K562 (cell line): ENCODE measurements at regions of chr19 and their contacts with region 1.

Region 1: GRCh38 chr19:19145684-19146608 is 7.7 kb upstream of the TMEM161A start:
- DNase-seq: peak; percentile 82 to 88 (median 86)
- ATAC-seq: peak; percentile 95
- H3K4me3 ChIP-seq: no peak overlapping the region
- H3K27ac ChIP-seq: 0 out of 3 replicates have a peak overlapping the region, but pooled peaks have one; percentile 28
- H3K4me1 ChIP-seq: peaks cover 0 to 19% of the 10 kb centered on the region in 2 experiments; a peak in 2 of 5 replicates
- H3K27me3 ChIP-seq: no peaks in the 10 kb centered on the region; a peak in 1 of 5 replicates
- CTCF ChIP-seq: peak; percentile 85 to 97 (median 95)
- EP300 ChIP-seq: no peak
- POLR2A ChIP-seq: no peak
- RAD21 ChIP-seq: peak; percentile 86 to 93

Region 2: GRCh38 chr19:18919086-18919899 is 226.7 kb before region 1 on chr19 and contains the starts of genes COPE and DDX49:
- CTCF ChIA-PET with region 1: no interaction called
- POLR2A ChIA-PET with region 1: no interaction called
- in situ Hi-C with region 1: no loop called
- intact Hi-C with region 1: no loop called
- DNase-seq: peak; percentile 97 to 100 (median 98)
- ATAC-seq: peak; percentile 98
- H3K4me3 ChIP-seq: peak within 1 kb of the TSS; percentile 95
- H3K27ac ChIP-seq: peak within 1 kb of the TSS; percentile 90
- H3K4me1 ChIP-seq: peaks cover 8 to 27% of the 10 kb centered on the region in 2 experiments; a peak in 4 of 5 replicates
- H3K27me3 ChIP-seq: no peaks in the 10 kb centered on the region
- CTCF ChIP-seq: no peak
- EP300 ChIP-seq: no peak
- POLR2A ChIP-seq: peak; percentile 95
- RAD21 ChIP-seq: no peak
- polyA plus RNA-seq, gene COPE: 5.8 to 18.3 TPM
- polyA plus RNA-seq, gene DDX49: 1.1 to 6.3 TPM

Region 3: GRCh38 chr19:18975011-18975410 is 170.9 kb before region 1 on chr19:
- CTCF ChIA-PET with region 1: no interaction called
- POLR2A ChIA-PET with region 1: no interaction called
- in situ Hi-C with region 1: no loop called
- intact Hi-C with region 1: no loop called
- DNase-seq: no peak
- ATAC-seq: no peak
- H3K4me3 ChIP-seq: no peak overlapping the region
- H3K27ac ChIP-seq: no peak overlapping the region
- H3K4me1 ChIP-seq: peaks cover 9 to 12% of the 10 kb centered on the region in 2 experiments
- H3K27me3 ChIP-seq: no peaks in the 10 kb centered on the region; a peak in 1 of 5 replicates
- CTCF ChIP-seq: no peak
- EP300 ChIP-seq: no peak
- POLR2A ChIP-seq: no peak
- RAD21 ChIP-seq: no peak

Region 4: DNA sequence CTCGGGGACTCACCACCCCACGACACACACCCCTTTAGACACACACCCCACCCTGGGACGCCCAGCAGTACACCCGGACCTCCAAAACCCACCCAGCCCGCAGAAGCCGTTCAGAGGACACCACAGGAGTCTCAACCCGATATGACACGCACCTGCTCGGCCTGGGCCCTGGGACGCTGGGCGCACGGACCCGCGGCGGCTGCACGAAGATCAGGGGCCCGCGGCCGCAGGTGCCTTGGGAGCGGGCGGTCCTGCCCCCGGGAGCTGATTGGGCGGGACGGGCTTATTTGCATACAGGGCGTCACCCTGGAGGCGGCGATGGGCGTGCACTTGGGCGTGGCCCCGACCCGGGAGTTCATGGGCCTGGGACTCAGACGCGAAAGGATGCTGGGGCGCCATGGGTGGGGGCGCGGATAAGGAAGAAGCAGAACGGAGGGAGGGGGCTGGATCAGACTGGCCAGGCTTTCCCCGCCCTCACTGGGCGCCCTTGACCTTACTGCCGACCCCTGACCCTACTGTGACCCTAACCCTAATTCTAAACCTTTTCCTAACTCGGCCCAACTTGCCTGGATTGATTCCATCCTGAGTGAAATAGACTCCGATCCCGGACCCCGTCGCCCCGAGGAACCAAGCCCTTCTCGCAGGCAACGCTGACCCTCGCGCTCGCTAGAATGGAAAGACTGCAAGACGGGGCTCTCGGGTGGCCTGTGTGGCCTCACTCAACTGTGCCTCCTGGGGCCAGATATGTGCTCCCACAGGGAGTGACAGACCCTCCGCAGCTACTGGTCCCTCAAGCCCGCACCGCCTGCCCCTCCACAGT is 24.3 kb after region 1 on chr19 and contains the start of gene MEF2B:
- CTCF ChIA-PET with region 1: interaction called, 20 read pairs
- POLR2A ChIA-PET with region 1: interaction called, 4 read pairs
- in situ Hi-C with region 1: no loop called
- intact Hi-C with region 1: loop called (anchors 1 kb)
- DNase-seq: peak; percentile 94 to 98 (median 98)
- ATAC-seq: peak; percentile 94
- H3K4me3 ChIP-seq: peak within 1 kb of the TSS; percentile 34
- H3K27ac ChIP-seq: peak within 1 kb of the TSS; percentile 40; the same call in 1 of the 3 replicates
- H3K4me1 ChIP-seq: peaks cover 31 to 34% of the 10 kb centered on the region in 2 experiments; a peak in 4 of 5 replicates
- H3K27me3 ChIP-seq: no peaks in the 10 kb centered on the region
- CTCF ChIP-seq: no peak
- EP300 ChIP-seq: no peak
- POLR2A ChIP-seq: 0 out of 2 replicates have a peak, but pooled peaks have one; percentile 19
- RAD21 ChIP-seq: no peak
- polyA plus RNA-seq, gene MEF2B: not detected

Region 5: GRCh38 chr19:19224852-19225494 is 79.0 kb after region 1 on chr19:
- CTCF ChIA-PET with region 1: interaction called, 12 read pairs
- POLR2A ChIA-PET with region 1: no interaction called
- in situ Hi-C with region 1: no loop called
- intact Hi-C with region 1: loop called (anchors 1 kb)
- DNase-seq: peak; percentile 96 to 97 (median 96)
- ATAC-seq: peak; percentile 96
- H3K4me3 ChIP-seq: peak overlapping the region; percentile 37
- H3K27ac ChIP-seq: no peak overlapping the region
- H3K4me1 ChIP-seq: peaks cover 3 to 25% of the 10 kb centered on the region in 2 experiments; a peak in 4 of 5 replicates
- H3K27me3 ChIP-seq: peaks cover 5 to 48% of the 10 kb centered on the region in 2 experiments; a peak in 3 of 5 replicates
- CTCF ChIP-seq: peak; percentile 88 to 91 (median 90)
- EP300 ChIP-seq: 0 out of 2 replicates have a peak, but pooled peaks have one; percentile 16
- POLR2A ChIP-seq: no peak
- RAD21 ChIP-seq: peak; percentile 76 to 83

Region 6: GRCh38 chr19:19342756-19343322 is 196.9 kb after region 1 on chr19:
- CTCF ChIA-PET with region 1: interaction called, 10 read pairs
- POLR2A ChIA-PET with region 1: no interaction called
- in situ Hi-C with region 1: loop called (anchors 5 kb)
- intact Hi-C with region 1: loop called (anchors 1 kb)
- DNase-seq: peak; percentile 83 to 87 (median 85)
- ATAC-seq: peak; percentile 98
- H3K4me3 ChIP-seq: no peak overlapping the region
- H3K27ac ChIP-seq: no peak overlapping the region
- H3K4me1 ChIP-seq: peaks cover 0 to 29% of the 10 kb centered on the region in 2 experiments; a peak in 1 of 5 replicates
- H3K27me3 ChIP-seq: no peaks in the 10 kb centered on the region
- CTCF ChIP-seq: peak; percentile 88 to 94 (median 92)
- EP300 ChIP-seq: no peak
- POLR2A ChIP-seq: no peak
- RAD21 ChIP-seq: peak; percentile 40 to 77; a peak in 3 of 4 replicates